ENCODE measurements at regions of chr5 and their contacts with region 1.

Region 1: DNA sequence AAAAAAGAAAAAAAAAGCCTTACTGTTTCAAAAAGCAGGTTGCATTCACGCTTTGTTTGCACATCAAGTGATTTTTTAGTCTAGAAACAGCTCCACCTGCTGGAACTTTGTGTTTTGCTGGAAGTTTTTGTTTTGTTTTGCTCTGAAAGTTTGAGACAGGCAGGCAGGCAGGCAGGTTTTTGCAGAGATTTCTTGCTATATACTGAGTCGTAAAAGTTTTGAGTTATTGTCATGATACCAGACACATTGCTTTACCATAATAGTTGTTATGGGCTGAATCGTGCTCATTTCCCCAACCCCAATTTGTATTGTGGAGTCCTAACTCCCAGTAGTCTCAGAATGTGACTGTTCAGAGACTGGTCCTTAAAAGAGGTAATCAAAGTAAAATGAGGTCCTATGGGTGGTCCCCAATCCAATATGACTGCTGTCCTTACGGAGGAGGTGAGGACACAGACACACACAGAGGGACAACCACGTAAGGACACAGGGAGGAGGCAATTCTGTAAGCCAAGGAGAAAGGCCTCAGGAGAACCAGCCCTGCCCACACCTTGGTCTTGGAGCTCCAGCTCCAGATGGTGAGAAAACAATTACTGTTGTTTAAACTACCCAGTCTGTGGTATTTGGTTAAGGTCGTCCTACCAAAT is 20.9 kb downstream of the OR2Y1 start:
- DNase-seq: peak; percentile 36
- H3K27ac ChIP-seq: no peak overlapping the region
- CTCF ChIP-seq: peak; percentile 86

Region 2: DNA sequence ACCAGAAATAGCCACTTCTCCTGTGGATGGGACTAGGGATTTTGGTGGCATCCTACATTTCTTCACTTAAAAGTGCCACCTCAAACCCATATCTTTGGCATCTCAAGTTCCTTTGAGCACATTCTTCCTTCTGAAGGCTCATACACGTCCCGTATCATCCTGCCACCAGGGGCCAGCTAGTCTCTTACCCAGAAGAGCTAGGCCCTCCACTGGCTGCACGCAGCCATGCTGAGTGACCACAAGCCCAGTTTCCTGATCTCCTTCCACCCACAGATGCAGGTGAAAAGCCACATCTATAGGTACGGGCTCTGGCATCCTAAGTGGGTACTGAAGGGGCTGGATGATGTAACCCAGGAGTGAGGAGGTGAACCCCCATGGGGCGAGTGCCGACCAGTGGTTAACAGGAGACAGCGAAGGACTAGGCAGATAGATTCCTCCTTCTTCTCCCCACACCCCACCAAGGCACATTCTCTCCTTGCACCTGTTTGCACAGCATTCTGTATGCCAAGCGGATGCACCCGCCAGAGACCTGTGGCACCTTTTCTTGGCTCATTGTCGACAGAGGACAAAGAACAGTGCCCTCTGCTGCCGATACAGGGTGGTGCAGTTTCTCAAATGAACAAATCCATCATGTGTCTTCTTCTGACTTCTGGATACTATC is 113.2 kb before region 1 on chr5:
- CTCF ChIA-PET with region 1: no interaction called
- POLR2A ChIA-PET with region 1: no interaction called
- DNase-seq: peak; percentile 60
- H3K27ac ChIP-seq: no peak overlapping the region
- CTCF ChIP-seq: peak; percentile 87

Region 3: DNA sequence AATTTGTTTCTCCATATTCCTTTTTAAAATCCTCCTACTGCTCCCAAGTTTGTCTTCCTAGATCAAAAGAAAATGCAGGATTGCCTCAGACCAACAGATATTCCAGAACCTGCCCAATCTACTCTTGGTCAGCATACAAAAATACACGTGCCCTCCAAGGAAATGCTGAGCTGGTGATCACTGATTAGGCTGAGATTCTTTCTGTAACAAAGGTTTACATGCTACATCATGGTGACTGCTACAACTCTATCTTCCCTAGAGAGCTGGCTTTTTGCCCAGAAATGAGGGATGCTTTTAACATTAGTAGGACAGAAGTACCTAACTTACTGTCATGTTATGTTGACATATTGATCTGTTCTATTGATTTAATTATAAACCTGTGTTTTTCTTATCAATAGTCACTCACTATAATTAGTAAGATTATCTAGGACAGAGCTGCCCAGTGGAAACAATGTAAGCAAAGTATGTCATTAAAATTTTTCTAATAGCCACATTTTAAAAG is 14.5 kb before region 1 on chr5:
- CTCF ChIA-PET with region 1: interaction called, 10 read pairs
- POLR2A ChIA-PET with region 1: no interaction called
- DNase-seq: peak; percentile 20
- H3K27ac ChIP-seq: no peak overlapping the region
- CTCF ChIP-seq: no peak

Region 4: DNA sequence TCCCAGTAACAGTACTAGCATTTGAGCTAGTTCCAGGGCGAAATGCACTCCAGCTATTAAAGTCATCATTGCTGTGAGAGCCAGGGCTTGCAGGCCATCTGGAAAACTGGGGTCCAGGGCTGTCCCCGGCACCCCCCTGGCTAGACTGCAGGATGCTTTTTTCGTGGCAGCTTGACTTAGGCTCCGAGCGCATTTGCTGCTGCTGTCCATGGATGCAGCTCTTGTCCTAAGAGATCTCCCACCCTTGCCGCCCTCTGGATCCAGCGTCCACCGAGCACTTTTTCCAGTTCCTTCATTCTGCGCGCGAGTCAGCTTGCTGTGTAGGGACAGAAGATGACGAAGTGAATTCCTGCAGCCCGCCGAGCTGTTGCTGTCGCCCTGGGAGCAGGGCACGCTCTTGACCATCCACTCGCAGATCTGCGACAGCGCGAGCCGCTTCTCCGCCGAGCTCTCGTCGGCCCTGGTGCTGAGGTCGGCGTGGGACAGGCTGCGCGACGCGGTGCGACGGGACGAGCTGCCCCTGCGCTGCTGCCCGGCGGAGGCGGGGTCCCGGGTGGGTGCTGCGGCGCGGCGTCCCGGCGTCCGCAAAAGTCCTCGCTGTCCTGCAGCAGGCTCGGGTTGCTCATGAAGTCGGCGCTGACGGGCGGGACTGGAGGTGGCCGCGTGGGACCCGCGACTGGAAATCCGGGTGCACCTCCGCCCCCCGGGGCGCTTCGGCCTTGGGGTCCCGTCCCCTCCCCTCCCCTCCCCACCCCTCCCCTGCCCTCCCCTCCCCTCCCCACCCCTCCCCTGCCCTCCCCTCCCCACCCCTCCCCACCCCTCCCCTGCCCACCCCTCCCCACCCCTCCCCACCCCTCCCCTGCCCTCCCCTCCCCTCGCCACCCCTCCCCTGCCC is 381.4 kb after region 1 on chr5:
- CTCF ChIA-PET with region 1: no interaction called
- POLR2A ChIA-PET with region 1: no interaction called
- DNase-seq: no peak
- H3K27ac ChIP-seq: no peak overlapping the region
- CTCF ChIP-seq: no peak